K562 (cell line): ENCODE measurements at regions of chr16 and their contacts with region 1.

Region 1: DNA sequence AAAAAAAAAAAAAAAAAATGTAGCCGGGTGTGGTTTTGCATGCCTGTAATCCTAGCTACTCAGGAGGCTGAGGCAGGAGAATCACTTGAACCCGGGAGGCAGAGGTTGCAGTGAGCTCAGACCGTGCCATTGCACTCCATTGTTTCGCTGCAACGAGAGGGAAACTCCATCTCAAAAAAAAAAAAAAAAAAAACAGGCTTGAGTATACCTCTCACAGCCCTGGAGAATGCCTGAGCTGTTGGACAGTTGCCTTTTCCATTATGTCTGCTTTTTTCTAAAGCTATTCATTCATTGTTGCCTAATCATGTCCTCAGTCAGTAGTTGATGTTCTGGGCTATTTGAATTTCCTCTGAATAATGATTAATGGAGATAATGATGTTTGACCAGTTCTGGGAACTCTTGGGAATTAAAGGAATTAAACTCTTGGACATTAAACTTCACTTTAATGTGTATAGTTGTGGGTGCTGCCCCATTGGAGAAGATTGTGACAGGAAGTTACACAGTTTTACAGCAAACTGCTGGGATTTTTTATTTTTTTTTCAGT is 11.8 kb downstream of the HMOX2 start:
- DNase-seq: no peak
- ATAC-seq: no peak
- H3K4me3 ChIP-seq: no peak overlapping the region
- H3K27ac ChIP-seq: no peak overlapping the region
- H3K4me1 ChIP-seq: peaks cover 0 to 5% of the 10 kb centered on the region in 2 experiments; a peak in 2 of 5 replicates
- H3K27me3 ChIP-seq: no peaks in the 10 kb centered on the region
- CTCF ChIP-seq: no peak
- EP300 ChIP-seq: no peak
- POLR2A ChIP-seq: no peak
- RAD21 ChIP-seq: no peak

Region 2: GRCh38 chr16:4500272-4500671 is 12.2 kb after region 1 on chr16:
- CTCF ChIA-PET with region 1: no interaction called
- POLR2A ChIA-PET with region 1: interaction called, 10 read pairs
- in situ Hi-C with region 1: no loop called
- intact Hi-C with region 1: no loop called
- DNase-seq: no peak
- ATAC-seq: no peak
- H3K4me3 ChIP-seq: no peak overlapping the region
- H3K27ac ChIP-seq: no peak overlapping the region
- H3K4me1 ChIP-seq: peaks cover 0 to 2% of the 10 kb centered on the region in 2 experiments; a peak in 2 of 5 replicates
- H3K27me3 ChIP-seq: no peaks in the 10 kb centered on the region
- CTCF ChIP-seq: no peak
- EP300 ChIP-seq: no peak
- POLR2A ChIP-seq: no peak
- RAD21 ChIP-seq: no peak

Region 3: DNA sequence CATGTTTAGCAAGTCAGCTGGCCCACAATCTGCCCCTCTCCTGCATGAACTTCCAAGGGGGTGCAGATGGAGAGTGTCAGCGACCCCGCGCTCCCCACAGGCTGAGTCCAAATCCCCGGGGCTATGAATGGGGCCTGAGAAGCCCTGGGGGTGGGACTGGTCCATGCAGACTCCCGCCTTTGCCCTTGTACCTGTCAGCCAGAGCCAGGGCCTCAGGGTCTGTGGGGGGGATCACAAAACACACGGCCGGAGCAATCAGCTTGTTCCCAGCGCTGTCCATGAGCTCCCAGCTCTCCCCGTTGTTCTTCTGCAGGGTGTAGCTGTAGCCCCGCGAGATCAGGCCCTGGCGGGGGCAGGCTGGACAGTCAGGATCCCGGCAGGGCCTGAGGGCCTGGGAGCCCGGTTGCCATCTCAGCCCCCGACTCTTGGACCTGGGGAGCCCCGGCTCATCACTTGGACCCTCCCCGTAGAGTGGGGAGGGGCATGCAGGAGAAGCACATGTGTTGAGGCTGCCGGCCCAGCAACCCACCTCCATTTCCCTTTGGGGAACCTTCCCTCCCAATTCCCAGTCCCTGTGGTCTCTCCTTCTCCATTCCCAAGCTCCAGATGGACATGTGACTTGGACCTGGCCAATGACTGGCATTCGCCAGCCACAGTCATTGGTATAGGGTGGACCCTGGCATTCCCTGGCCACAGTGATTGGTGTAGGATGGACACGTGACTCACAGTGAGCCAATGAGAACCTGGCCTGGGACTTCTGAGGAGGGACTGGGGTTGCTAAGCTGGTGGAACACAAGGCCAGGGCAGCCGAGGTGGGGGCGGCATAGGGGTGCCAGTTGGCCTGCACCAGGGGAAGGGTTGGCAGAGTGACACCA is 406.5 kb after region 1 on chr16:
- CTCF ChIA-PET with region 1: no interaction called
- POLR2A ChIA-PET with region 1: no interaction called
- in situ Hi-C with region 1: no loop called
- intact Hi-C with region 1: no loop called
- DNase-seq: peak; percentile 24 to 74 (median 68)
- ATAC-seq: peak; percentile 70
- H3K4me3 ChIP-seq: no peak overlapping the region
- H3K27ac ChIP-seq: no peak overlapping the region
- H3K4me1 ChIP-seq: peaks cover 0 to 53% of the 10 kb centered on the region in 2 experiments; a peak in 2 of 5 replicates
- H3K27me3 ChIP-seq: peaks cover 16 to 38% of the 10 kb centered on the region in 2 experiments; a peak in 3 of 5 replicates
- CTCF ChIP-seq: no peak
- EP300 ChIP-seq: no peak
- POLR2A ChIP-seq: no peak
- RAD21 ChIP-seq: no peak